BJ (cell line): ENCODE measurements at regions of chr1 and their contacts with region 1.

Region 1: GRCh38 chr1:205983925-205984725 is 19.1 kb downstream of the RAB7B start:
- DNase-seq: no peak
- H3K4me3 ChIP-seq: no peak overlapping the region
- H3K27me3 ChIP-seq: no peaks in the 10 kb centered on the region
- CTCF ChIP-seq: peak; percentile 91

Region 2: DNA sequence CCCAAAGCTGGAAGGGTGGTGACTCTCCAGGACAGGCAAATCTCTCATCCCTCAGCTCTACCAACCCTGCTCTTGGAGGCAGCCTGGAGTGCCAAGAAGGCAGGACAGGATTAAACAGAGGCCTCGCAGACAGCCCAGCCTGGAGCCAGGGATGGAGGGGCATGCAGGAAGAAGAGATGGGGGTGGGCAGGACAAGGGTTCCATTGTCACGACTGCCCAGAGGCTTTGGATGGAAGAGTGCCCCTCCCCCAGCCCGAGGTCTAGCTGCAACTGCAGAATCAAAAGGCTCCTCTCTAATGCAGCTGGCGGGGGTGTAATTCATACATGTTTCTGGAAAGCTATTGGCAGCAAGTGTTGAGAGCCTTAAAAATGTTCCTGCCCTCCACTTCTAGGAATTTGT is 10.2 kb after region 1 on chr1:
- CTCF ChIA-PET with region 1: interaction called, 41 read pairs
- POLR2A ChIA-PET with region 1: no interaction called
- DNase-seq: no peak
- H3K4me3 ChIP-seq: no peak overlapping the region
- H3K27me3 ChIP-seq: no peaks in the 10 kb centered on the region
- CTCF ChIP-seq: no peak

Region 3: GRCh38 chr1:206001476-206001888 is 17.4 kb after region 1 on chr1:
- CTCF ChIA-PET with region 1: interaction called, 41 read pairs
- POLR2A ChIA-PET with region 1: no interaction called
- DNase-seq: peak; percentile 79
- H3K4me3 ChIP-seq: no peak overlapping the region
- H3K27me3 ChIP-seq: no peaks in the 10 kb centered on the region
- CTCF ChIP-seq: no peak

Region 4: DNA sequence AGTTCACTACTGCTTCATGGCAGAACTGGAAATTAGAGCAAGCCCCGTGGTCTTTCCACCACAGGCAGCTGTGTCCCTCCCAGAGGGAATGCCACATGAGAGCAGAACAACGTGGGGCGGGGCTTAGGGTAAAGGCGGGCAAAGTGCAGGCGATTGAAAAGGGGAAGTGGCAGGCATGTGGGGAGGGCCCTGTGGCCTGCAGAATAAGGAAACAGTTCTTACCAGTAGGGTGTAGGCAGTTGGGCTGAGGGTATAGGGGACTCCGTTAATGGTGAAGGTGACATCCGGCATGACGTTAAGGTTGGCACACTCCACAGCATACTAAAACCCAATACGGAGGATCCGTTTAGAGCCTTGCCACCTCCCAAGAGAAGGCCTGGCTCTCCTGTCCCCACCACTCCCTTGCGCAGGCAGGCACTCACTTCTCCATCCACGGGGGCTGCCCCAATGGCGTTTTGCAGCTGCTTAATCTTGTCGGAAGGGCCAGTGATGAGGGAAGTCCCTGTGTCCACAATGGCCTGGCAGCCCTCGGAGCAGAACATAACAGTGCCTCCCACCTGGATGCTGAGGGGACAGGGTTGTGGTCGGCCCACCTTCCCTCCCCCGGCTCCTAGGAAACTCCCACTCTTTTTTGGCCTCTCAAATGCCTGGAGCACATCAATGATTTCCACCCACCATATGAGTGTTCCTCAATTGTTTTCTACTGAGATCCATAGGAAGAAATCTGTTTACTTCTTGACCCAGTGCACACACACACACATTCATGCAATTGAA is 28.1 kb after region 1 on chr1:
- CTCF ChIA-PET with region 1: no interaction called
- POLR2A ChIA-PET with region 1: no interaction called
- DNase-seq: no peak
- H3K4me3 ChIP-seq: no peak overlapping the region
- H3K27me3 ChIP-seq: peaks cover 4% of the 10 kb centered on the region
- CTCF ChIP-seq: no peak

Region 5: GRCh38 chr1:206030714-206031113 is 46.6 kb after region 1 on chr1:
- CTCF ChIA-PET with region 1: interaction called, 15 read pairs
- POLR2A ChIA-PET with region 1: no interaction called
- DNase-seq: no peak
- H3K4me3 ChIP-seq: no peak overlapping the region
- H3K27me3 ChIP-seq: peaks cover 14% of the 10 kb centered on the region
- CTCF ChIP-seq: peak; percentile 94

Region 6: DNA sequence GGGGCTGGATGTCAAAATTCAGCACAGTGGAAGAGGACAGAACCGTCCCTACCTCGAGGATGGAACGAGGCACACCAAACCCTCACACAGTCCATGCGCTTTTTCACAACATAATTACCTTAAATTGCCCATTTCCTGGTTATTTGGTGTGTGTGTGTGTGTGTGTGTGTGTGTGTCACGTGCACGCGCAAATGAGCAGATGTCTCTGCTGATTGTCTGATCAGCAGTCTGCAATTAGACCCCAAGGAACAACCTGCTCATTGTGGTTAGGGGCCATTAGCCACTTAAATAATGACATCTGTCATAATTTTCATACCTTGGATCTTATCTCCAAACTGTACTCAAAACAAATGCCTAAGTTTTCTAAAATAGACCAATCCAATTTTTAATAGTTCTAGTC is 109.9 kb after region 1 on chr1:
- CTCF ChIA-PET with region 1: interaction called, 11 read pairs
- POLR2A ChIA-PET with region 1: no interaction called
- DNase-seq: no peak
- H3K4me3 ChIP-seq: no peak overlapping the region
- H3K27me3 ChIP-seq: peaks cover 16% of the 10 kb centered on the region
- CTCF ChIP-seq: no peak